B cell (primary cell): ENCODE measurements at regions of chr4 and their contacts with region 1.

Region 1: DNA sequence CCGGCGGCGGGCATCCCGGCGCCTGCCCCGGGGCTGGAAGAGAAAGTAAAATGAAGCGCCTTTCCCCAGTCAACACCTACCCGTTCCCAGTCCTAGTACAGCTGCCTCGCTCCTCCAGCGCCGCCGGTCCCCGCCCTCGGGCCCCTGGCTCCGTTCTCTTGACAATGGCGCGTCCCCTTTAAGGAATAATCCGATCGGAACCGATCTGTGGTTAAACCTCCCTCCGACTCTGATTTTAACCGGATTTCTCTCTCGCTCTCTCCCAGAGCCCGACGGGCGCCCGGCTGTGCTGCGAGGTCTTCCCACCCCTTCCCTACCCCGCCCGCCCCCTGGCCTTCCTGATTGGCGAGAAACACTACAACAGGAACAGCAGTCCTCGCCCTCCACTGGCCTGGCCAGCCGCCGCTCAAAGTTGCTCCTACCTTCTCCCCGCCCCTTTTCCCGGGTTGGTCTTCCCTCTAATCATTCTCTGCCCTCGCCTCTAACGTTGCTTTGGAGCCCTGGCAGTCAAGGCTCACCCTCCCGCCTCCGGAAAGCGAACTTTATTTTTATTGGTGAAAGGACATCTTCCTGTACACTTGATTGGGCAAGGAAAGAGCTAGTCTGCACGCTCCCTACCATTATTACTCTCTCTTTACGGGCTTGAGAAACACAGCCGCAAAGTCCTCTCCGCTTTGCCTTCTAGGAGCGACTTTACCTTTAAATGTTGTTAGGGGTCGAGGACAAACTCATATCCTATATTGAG is at the start of gene FRYL:
- DNase-seq: peak; percentile 97
- ATAC-seq: peak; percentile 88
- H3K4me3 ChIP-seq: peak within 1 kb of the TSS; percentile 87 to 99 (median 94)
- H3K4me3 Mint-ChIP-seq: peak within 1 kb of the TSS; percentile 89
- H3K27ac ChIP-seq: peak within 1 kb of the TSS; percentile 67 to 80
- H3K27ac Mint-ChIP-seq: peak within 1 kb of the TSS; percentile 89
- H3K4me1 ChIP-seq: peaks cover 27 to 35% of the 10 kb centered on the region in 2 donors
- H3K4me1 Mint-ChIP-seq: peaks cover 39% of the 10 kb centered on the region
- H3K27me3 ChIP-seq: no peaks in the 10 kb centered on the region
- H3K27me3 Mint-ChIP-seq: no peaks in the 10 kb centered on the region
- CTCF ChIP-seq: no peak
- total RNA-seq, gene FRYL: 133 and 138 TPM in 2 replicates

Region 2: DNA sequence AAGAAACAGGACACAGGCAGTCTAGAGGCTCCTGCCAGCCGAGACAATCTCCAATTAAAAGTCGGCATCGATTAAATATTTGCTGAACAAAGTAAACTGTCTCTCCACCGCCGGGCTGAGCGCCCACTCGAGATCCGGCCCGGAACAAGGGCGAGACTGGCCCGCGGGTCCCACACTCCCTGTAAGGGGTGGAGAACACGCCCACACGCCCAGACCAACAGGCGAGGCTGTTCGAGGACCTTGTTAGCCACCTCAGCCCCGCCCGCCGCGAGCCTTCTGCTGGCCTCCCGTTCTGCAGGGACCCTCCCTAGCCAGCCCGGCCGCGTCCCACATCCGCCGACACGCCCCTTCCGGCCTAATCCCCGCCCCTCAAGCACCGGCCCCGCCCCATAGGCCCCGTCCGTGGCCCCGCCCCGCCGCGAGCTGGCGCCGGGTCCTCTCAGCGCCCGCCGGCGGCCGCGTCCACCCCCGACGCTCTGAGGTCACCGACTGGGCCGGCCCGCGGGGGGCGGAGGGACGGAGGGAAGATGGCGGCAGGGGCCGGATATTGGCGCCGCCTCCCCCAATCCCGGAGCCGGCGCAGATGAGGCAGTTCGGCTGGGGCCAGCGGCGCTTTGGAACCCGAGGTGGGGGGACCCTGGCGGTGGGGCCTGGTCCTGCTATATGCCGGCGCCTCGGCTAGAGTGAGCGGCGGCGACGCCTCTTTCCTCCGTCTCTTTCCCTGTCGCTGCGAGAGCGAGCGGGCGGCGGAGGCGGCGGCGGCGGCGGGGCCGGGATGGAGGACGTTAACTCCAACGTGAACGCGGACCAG is 439.0 kb before region 1 on chr4 and contains the start of gene SLAIN2:
- CTCF ChIA-PET with region 1: no interaction called
- POLR2A ChIA-PET with region 1: no interaction called
- intact Hi-C with region 1: loop called (anchors 1 kb)
- DNase-seq: peak; percentile 98
- ATAC-seq: peak; percentile 88
- H3K4me3 ChIP-seq: peak within 1 kb of the TSS; percentile 79 to 96 (median 83)
- H3K4me3 Mint-ChIP-seq: peak within 1 kb of the TSS; percentile 96
- H3K27ac ChIP-seq: peak within 1 kb of the TSS; percentile 93 to 94
- H3K27ac Mint-ChIP-seq: peak within 1 kb of the TSS; percentile 98
- H3K4me1 ChIP-seq: peaks cover 23 to 28% of the 10 kb centered on the region in 2 donors
- H3K4me1 Mint-ChIP-seq: peaks cover 43% of the 10 kb centered on the region
- H3K27me3 ChIP-seq: no peaks in the 10 kb centered on the region
- H3K27me3 Mint-ChIP-seq: no peaks in the 10 kb centered on the region
- CTCF ChIP-seq: peak; percentile 60
- total RNA-seq, gene SLAIN2: 69.1 and 69.2 TPM in 2 replicates

Region 3: DNA sequence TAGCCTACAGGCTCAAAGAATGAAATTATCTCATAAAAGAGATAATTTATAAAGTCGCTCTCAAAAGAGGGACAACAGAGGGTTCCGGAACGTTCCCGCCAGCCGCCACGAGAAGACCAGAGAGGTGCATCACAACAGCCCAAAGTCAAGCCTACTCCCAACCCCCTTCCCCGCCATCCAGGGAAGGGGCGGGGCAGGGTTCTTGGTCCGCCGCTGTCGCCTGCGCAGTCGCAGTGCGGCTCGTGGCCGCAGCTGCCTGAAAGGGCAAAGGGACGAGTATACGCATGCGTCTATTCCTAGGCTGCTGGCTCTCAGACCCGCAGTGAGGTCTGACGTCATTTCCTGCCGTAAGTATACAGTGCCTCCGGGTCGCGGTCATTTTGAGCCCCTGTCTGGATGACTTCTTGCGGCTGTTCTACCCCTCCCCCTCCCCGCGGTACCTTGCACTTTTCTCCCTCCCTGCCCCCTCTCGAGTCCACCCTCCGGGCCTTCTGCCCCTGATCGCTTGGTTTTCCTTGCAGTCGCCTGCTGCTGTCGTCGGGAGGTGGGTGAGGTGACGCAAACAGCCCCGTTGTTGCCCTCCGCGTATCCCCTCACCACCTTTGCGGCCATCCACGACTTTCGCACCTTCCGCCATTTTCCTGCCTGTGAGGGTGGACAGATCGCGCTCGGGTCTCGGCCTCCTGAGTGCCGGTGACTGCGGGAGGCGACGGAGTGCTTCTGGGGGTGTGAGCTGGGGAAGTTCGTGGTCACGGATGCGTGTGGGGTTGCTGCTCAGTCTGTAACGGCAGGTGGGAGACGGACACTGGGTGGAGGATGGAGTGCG is 50.7 kb after region 1 on chr4 and contains the start of gene OCIAD1:
- CTCF ChIA-PET with region 1: interaction called, 4 read pairs
- POLR2A ChIA-PET with region 1: interaction called, 8 read pairs
- intact Hi-C with region 1: loop called (anchors 1 kb)
- DNase-seq: peak; percentile 99
- ATAC-seq: peak; percentile 95
- H3K4me3 ChIP-seq: peak within 1 kb of the TSS; percentile 81 to 99 (median 93)
- H3K4me3 Mint-ChIP-seq: peak within 1 kb of the TSS; percentile 100
- H3K27ac ChIP-seq: peak within 1 kb of the TSS; percentile 96 to 98
- H3K27ac Mint-ChIP-seq: peak within 1 kb of the TSS; percentile 100
- H3K4me1 ChIP-seq: peaks cover 16% of the 10 kb centered on the region in 2 donors
- H3K4me1 Mint-ChIP-seq: peaks cover 21% of the 10 kb centered on the region
- H3K27me3 ChIP-seq: no peaks in the 10 kb centered on the region
- H3K27me3 Mint-ChIP-seq: no peaks in the 10 kb centered on the region
- CTCF ChIP-seq: no peak
- total RNA-seq, gene OCIAD1: 114 and 119 TPM in 2 replicates

Region 4: GRCh38 chr4:48906206-48907173 is 126.3 kb after region 1 on chr4 and contains the start of gene OCIAD2:
- CTCF ChIA-PET with region 1: interaction called, 6 read pairs
- POLR2A ChIA-PET with region 1: interaction called, 3 read pairs
- intact Hi-C with region 1: loop called (anchors 1 kb)
- DNase-seq: peak; percentile 88
- ATAC-seq: peak; percentile 97
- H3K4me3 ChIP-seq: peak within 1 kb of the TSS; percentile 36 to 80 (median 71)
- H3K4me3 Mint-ChIP-seq: peak within 1 kb of the TSS; percentile 93
- H3K27ac ChIP-seq: peak within 1 kb of the TSS; percentile 58 to 82
- H3K27ac Mint-ChIP-seq: peak within 1 kb of the TSS; percentile 86
- H3K4me1 ChIP-seq: peaks cover 16 to 20% of the 10 kb centered on the region in 2 donors
- H3K4me1 Mint-ChIP-seq: peaks cover 27% of the 10 kb centered on the region
- H3K27me3 ChIP-seq: no peaks in the 10 kb centered on the region
- H3K27me3 Mint-ChIP-seq: no peaks in the 10 kb centered on the region
- CTCF ChIP-seq: peak; percentile 51
- total RNA-seq, gene OCIAD2: 37.0 and 39.3 TPM in 2 replicates